ENCODE measurements at regions of chr7 and their contacts with region 1.

Region 1: GRCh38 chr7:129271500-129272355 is 46.9 kb downstream of the AHCYL2 start:
- H3K4me3 ChIP-seq: no peak overlapping the region
- H3K27ac ChIP-seq: no peak overlapping the region
- H3K4me1 ChIP-seq: no peaks in the 10 kb centered on the region
- CTCF ChIP-seq: 0 out of 2 replicates have a peak, but pooled peaks have one; percentile 31

Region 2: DNA sequence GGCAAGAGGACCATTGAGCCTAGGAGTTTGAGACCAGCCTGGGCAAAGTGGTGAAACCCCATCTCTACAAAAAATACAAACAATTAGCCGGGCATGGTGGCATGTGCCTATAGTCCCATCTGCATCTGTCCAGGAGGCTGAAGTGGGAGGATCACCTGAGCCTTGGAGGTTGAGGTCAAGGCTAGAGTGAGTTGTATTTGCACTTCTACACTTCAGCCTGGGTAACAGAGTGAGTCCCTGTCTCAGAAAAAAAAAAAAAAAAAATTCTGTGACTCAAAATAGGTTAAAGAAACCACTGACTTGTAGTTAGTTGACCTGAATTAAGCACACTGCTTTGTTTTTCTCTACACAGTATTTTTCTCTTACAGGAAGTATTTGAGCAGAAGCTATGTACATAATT is 720.8 kb before region 1 on chr7:
- CTCF ChIA-PET with region 1: no interaction called
- POLR2A ChIA-PET with region 1: no interaction called
- H3K4me3 ChIP-seq: no peak overlapping the region
- H3K27ac ChIP-seq: no peak overlapping the region
- H3K4me1 ChIP-seq: no peaks in the 10 kb centered on the region
- CTCF ChIP-seq: no peak

Region 3: GRCh38 chr7:128919881-128920799 is 351.6 kb before region 1 on chr7:
- CTCF ChIA-PET with region 1: no interaction called
- POLR2A ChIA-PET with region 1: no interaction called
- H3K4me3 ChIP-seq: no peak overlapping the region
- H3K27ac ChIP-seq: no peak overlapping the region
- H3K4me1 ChIP-seq: no peaks in the 10 kb centered on the region
- CTCF ChIP-seq: 0 out of 2 replicates have a peak, but pooled peaks have one; percentile 9

Region 4: GRCh38 chr7:129041142-129042085 is 230.3 kb before region 1 on chr7:
- CTCF ChIA-PET with region 1: no interaction called
- POLR2A ChIA-PET with region 1: no interaction called
- H3K4me3 ChIP-seq: no peak overlapping the region
- H3K27ac ChIP-seq: no peak overlapping the region
- H3K4me1 ChIP-seq: peaks cover 6% of the 10 kb centered on the region
- CTCF ChIP-seq: no peak

Region 5: DNA sequence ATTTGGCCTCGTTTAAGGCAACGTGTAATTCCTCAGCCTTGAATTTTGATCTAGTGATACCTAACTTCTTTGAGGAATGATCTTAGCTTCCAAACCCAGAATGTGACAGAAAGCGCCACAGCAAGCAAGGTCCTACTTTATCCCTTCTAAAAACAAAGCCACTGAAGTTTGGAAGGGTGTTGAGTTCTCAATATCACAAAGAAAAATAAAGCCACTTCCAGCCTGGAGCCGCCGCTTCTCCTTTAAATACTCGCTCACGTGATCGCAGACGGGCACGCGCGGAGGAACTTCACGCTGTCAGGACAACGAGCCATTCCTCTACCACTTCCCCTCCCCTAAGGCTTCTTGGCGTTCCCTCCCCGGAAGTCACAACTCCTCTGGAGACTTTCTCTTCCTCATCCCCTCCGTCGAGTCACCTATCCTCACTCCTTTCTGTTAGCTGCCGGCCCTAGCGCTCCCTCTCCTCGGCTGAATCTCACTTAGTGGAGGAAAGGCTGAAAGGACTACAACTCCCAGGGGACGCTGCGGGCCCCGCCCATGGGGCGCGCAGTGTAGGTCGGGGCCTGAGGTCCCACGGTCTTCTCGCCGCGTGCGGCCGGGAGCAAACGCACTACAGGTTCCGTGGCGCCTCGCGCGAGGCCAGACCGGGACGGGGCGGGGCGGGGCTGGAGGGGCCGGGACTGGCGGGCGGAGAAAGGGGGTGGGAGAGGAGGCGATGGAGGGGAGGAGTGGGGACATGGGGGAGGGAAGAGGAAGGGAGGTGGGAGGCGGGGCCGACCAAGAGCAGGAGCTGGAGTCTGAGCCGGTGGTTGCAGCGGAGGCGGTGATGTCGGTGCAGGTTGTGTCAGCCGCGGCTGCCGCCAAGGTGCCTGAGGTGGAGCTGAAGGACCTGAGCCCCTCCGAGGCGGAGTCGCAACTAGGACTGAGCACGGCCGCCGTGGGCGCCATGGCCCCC is 47.2 kb before region 1 on chr7 and contains the start of gene AHCYL2:
- CTCF ChIA-PET with region 1: interaction called, 95 read pairs
- POLR2A ChIA-PET with region 1: no interaction called
- H3K4me3 ChIP-seq: peak within 1 kb of the TSS; percentile 85
- H3K27ac ChIP-seq: peak within 1 kb of the TSS; percentile 80
- H3K4me1 ChIP-seq: peaks cover 17% of the 10 kb centered on the region
- CTCF ChIP-seq: no peak

Region 6: GRCh38 chr7:129285111-129285510 is 13.4 kb after region 1 on chr7:
- CTCF ChIA-PET with region 1: interaction called, 15 read pairs
- POLR2A ChIA-PET with region 1: no interaction called
- H3K4me3 ChIP-seq: no peak overlapping the region
- H3K27ac ChIP-seq: no peak overlapping the region
- H3K4me1 ChIP-seq: no peaks in the 10 kb centered on the region
- CTCF ChIP-seq: no peak

Region 7: DNA sequence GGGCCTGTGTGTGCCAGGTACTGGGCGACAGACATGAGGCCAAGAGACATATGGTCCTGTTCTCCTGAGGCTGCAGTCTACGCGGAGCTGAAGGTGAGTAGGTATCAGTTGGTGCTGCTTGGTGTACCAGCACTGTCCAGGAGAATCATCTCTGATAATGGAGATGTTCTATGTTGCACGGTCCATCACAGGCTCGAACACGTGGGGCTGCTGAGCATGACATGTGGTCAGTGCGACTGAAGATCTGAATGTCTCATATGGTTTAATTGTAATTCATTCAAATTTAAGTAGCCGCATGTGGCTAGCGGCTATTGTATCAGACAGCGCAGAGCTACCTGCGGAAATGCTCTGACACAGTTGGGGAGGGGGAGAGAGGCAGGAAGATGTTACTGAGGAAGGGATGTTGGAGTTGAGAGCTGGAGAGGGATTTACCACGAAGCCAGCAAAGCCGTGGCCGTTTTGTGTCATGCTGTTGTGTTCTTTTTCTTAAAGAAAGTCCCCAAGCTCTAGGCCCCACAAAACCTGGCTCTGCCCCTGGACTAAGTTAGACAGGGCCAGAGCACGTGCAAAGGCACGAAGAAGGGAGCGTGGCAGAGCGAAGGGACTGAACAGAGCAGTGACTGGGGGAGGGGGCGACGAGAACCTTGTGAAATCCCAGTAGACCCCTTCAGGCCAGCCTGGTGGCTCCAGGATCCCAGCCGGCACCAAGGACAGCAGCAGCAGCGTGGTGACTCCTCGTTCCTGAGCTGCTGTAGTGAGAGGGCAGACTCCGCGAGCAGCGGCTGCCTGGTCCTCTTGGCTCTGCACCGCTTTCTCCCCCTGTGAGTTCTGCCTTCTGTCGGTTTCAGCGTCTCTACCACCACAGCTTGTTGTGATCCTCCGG is 250.6 kb after region 1 on chr7:
- CTCF ChIA-PET with region 1: no interaction called
- POLR2A ChIA-PET with region 1: no interaction called
- H3K4me3 ChIP-seq: no peak overlapping the region
- H3K27ac ChIP-seq: no peak overlapping the region
- H3K4me1 ChIP-seq: no peaks in the 10 kb centered on the region
- CTCF ChIP-seq: no peak

Measured in HEK293 (cell line).